ENCODE measurements at regions of chr12 and their contacts with region 1.

Region 1: GRCh38 chr12:57238854-57239554 is 9.5 kb downstream of the SHMT2 start:
- DNase-seq: peak; percentile 86
- H3K4me3 ChIP-seq: peak overlapping the region in 2 of 3 experiments; percentile 3 to 35
- H3K27ac ChIP-seq: no peak overlapping the region
- H3K4me1 ChIP-seq: peaks cover 28% of the 10 kb centered on the region
- H3K27me3 ChIP-seq: peaks cover 55 to 58% of the 10 kb centered on the region in 2 experiments
- CTCF ChIP-seq: peak; percentile 100
- POLR2A ChIP-seq: no peak

Region 2: DNA sequence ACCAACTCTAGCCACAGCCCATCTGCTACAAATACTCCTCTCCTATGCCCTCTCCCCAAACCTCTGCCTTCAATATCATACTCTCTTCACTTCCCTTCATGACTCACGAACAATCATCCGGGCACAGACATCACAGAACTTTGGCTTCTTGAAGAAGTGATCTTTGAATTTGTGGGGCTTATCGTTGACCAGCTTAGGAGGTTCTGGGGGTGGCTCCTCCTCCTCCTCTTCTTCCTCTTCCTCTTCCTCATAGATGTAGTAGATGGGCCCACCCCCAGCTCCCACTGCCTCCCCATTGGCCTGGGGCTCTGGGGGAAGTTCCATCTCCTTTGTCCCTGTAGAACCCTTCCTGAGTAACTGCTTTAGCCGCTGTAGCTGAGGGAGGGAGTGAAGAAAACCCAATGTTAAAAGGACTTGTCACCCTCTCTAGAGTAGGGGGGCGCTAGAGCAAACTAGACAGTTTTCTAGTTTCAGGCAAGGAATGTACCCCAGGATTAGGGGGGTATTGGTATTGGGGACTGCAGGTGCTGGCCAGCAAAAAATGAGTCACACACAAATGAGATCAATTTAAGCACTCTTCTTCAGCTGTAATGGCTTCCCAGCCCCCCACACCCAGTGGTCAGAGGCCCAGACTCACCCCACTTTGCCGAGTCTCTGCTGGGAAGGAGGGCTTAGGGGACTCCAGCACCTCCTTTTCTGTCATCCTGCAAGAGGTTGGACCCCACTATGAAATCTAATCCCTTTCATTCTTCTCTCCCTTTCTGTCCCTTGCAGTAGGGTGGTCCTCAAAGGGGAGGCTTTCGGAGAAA is 10.1 kb after region 1 on chr12:
- CTCF ChIA-PET with region 1: interaction called, 26 read pairs
- POLR2A ChIA-PET with region 1: no interaction called
- dilution Hi-C with region 1: no loop called
- intact Hi-C with region 1: no loop called
- DNase-seq: no peak
- H3K4me3 ChIP-seq: no peak overlapping the region
- H3K27ac ChIP-seq: no peak overlapping the region
- H3K4me1 ChIP-seq: no peaks in the 10 kb centered on the region
- H3K27me3 ChIP-seq: peaks cover 0 to 3% of the 10 kb centered on the region in 2 experiments
- CTCF ChIP-seq: no peak
- POLR2A ChIP-seq: no peak